ENCODE measurements at regions of chr1 and their contacts with region 1.

Region 1: GRCh38 chr1:176897350-176898236 is 266.9 kb downstream of the ASTN1 start:
- DNase-seq: peak; percentile 7
- H3K4me3 ChIP-seq: no peak overlapping the region
- H3K27ac ChIP-seq: no peak overlapping the region
- H3K4me1 ChIP-seq: no peaks in the 10 kb centered on the region
- H3K27me3 ChIP-seq: no peaks in the 10 kb centered on the region
- CTCF ChIP-seq: peak; percentile 33 to 58 (median 50)
- POLR2A ChIP-seq: no peak

Region 2: DNA sequence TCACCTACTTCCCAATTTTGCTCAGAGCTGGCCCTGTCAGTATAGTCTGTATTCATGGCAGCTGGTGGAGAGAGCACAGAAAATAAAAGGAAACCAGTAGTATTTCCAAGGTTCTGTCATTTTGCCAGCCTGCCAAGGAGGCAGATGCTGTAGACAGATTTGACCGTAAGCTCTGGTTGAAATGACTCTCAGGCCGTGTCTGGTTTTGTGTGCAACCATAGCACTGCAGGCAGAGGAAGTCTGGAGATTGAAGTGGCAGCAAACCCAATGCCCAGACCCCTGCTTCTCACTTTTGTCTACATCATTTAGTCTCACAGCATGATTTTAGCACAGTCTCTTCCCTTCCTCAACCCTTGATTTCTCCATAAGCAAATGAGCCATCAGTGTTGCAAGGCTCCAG is 142.9 kb before region 1 on chr1:
- intact Hi-C with region 1: no loop called
- DNase-seq: no peak
- H3K4me3 ChIP-seq: no peak overlapping the region
- H3K27ac ChIP-seq: no peak overlapping the region
- H3K4me1 ChIP-seq: no peaks in the 10 kb centered on the region
- H3K27me3 ChIP-seq: no peaks in the 10 kb centered on the region
- CTCF ChIP-seq: no peak
- POLR2A ChIP-seq: no peak

Region 3: DNA sequence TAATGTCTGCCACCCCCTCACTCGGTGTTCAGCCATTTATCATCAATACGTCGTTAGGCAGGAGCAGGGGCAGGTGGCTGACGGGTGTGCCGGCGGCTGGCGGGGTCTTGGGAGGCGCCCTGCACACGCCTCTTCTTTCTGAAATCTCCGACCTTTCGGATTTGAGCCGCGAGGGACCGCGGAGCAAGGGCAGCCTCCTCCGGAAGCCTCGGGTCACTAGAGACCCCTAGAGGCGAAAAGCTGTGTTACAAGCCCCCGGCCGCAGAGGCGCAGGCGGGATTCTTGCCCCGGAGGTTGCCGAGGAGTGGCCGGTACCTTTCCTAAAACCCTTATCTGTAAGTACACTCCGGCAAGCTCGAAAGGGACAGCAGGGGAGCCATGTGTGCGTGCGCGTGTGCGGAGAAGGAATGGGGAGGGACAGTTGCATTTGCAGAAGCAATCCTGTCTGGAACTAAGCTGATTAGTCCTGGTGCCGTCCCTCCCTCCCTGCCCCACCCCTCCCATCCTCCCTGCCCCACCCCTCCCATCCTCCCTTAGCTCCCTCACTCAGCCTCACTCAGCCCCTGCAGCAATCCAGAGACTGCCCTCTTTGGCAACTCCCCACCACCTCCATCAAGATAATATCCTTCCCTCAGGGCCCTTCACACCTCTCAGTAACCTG is 284.2 kb after region 1 on chr1:
- intact Hi-C with region 1: loop called (anchors 2 kb)
- DNase-seq: peak; percentile 6
- H3K4me3 ChIP-seq: no peak overlapping the region
- H3K27ac ChIP-seq: no peak overlapping the region
- H3K4me1 ChIP-seq: no peaks in the 10 kb centered on the region
- H3K27me3 ChIP-seq: peaks cover 3% of the 10 kb centered on the region
- CTCF ChIP-seq: peak; percentile 21 to 55 (median 48)
- POLR2A ChIP-seq: no peak

Region 4: GRCh38 chr1:177780096-177780700 is 882.6 kb after region 1 on chr1:
- intact Hi-C with region 1: loop called (anchors 5 kb)
- DNase-seq: peak; percentile 12
- H3K4me3 ChIP-seq: no peak overlapping the region
- H3K27ac ChIP-seq: no peak overlapping the region
- H3K4me1 ChIP-seq: no peaks in the 10 kb centered on the region
- H3K27me3 ChIP-seq: no peaks in the 10 kb centered on the region
- CTCF ChIP-seq: peak in 3 of 4 experiments; percentile 44 to 65 (median 61)
- POLR2A ChIP-seq: no peak

Region 5: GRCh38 chr1:177948336-177948972 is 1050.9 kb after region 1 on chr1:
- intact Hi-C with region 1: loop called (anchors 1 kb)
- DNase-seq: peak; percentile 38
- H3K4me3 ChIP-seq: no peak overlapping the region
- H3K27ac ChIP-seq: no peak overlapping the region
- H3K4me1 ChIP-seq: no peaks in the 10 kb centered on the region
- H3K27me3 ChIP-seq: no peaks in the 10 kb centered on the region
- CTCF ChIP-seq: peak; percentile 58 to 78 (median 72)
- POLR2A ChIP-seq: no peak